Mammary epithelial cell (primary cell): ENCODE measurements at regions of chr14 and their contacts with region 1.

Region 1: DNA sequence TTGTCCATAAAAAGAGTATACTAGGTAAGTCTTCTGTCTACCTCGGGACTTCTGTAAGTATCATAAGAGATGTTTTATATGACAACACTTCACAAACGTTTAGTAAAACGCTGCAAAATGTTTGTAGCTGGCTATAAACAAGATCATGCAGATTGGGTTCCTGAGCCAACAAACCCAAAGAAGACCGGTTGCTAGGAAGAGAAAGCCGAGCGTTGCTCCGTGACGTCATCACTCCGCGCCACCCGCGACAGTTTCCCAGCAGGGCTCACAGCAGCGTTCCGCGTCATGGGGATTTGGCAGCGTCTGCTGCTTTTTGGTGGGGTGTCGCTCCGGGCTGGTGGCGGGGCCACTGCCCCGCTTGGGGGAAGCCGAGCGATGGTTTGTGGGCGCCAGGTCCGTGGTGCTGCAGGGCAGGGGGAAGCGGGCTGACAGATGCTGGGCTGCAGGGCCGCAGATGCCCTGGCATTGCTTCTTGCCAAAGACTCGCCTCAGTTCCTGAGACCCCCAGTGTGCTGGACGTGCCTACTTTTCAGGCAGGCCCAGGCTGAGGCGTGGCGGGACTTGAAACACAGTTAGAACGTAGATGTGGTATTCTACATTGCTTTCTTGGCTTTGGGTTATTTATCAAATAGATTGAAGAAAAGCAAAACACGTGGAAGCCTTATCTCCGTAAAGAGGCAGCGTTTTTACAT is at the start of gene NUBPL:
- DNase-seq: peak; percentile 87
- H3K4me3 ChIP-seq: peak within 1 kb of the TSS; percentile 77 to 94 (median 84)
- H3K27ac ChIP-seq: peak within 1 kb of the TSS; percentile 90
- H3K4me1 ChIP-seq: peaks cover 3% of the 10 kb centered on the region
- H3K27me3 ChIP-seq: no peaks in the 10 kb centered on the region
- CTCF ChIP-seq: no peak
- total RNA-seq, gene NUBPL: 12.3 to 16.6 TPM

Region 2: GRCh38 chr14:31543969-31544799 is 17.1 kb before region 1 on chr14:
- CTCF ChIA-PET with region 1: interaction called, 13 read pairs
- dilution Hi-C with region 1: no loop called
- in situ Hi-C with region 1: no loop called
- intact Hi-C with region 1: no loop called
- DNase-seq: no peak
- H3K4me3 ChIP-seq: no peak overlapping the region
- H3K27ac ChIP-seq: no peak overlapping the region
- H3K4me1 ChIP-seq: peaks cover 3% of the 10 kb centered on the region
- H3K27me3 ChIP-seq: no peaks in the 10 kb centered on the region
- CTCF ChIP-seq: peak; percentile 18 to 24

Region 3: DNA sequence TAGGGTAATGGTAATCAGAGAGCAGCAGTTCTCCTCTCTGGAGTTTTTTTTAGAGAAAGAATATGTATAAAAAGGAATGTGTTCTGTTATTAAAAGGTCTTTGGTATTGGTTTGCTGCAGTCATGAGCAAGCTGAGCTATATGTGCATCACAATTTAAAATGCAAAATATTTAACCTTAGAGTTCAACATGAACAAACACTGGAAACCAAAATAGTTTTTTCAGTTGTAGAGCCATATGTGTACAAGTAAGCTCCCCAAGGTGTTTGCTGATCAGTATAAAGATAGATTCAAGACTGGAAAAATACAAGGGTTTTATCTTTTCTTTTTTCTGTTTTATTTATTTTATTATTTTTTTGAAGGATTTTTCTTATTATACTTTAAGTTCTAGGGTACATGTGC is 245.0 kb after region 1 on chr14:
- CTCF ChIA-PET with region 1: no interaction called
- dilution Hi-C with region 1: no loop called
- in situ Hi-C with region 1: no loop called
- intact Hi-C with region 1: no loop called
- DNase-seq: no peak
- H3K4me3 ChIP-seq: no peak overlapping the region
- H3K27ac ChIP-seq: no peak overlapping the region
- H3K4me1 ChIP-seq: no peaks in the 10 kb centered on the region
- H3K27me3 ChIP-seq: no peaks in the 10 kb centered on the region
- CTCF ChIP-seq: no peak